Right ventricle myocardium superior (tissue), 1 donor: ENCODE measurements at regions of chr5 and their contacts with region 1.

Region 1: GRCh38 chr5:37005946-37006540 is 129.5 kb downstream of the NIPBL start:
- DNase-seq: no peak
- ATAC-seq: peak; percentile 51

Region 2: DNA sequence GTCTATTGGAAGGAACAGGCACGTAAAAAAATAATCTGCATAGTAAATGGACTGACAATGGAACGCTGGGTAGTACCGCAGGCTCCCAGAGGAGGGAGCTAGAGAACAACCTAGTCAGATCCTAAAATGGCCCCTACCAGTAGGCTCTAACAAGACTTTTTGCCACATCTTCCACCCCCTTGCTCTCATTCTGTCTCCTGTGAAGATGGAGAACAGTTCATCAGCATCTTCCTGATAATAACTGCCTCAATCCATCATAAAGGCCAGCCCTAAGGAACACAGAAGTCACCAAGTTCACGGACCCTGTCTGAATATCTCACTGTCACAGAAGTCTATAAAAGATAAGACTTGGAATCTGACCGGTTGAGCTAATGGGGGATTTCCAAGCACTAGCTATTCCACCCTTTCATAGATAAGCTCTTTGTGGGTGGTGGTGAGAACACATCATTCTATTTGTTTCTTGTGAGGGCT is 266.3 kb before region 1 on chr5:
- intact Hi-C with region 1: loop called (anchors 10 kb)
- DNase-seq: peak; percentile 74
- ATAC-seq: peak; percentile 61

Region 3: GRCh38 chr5:36854402-36855140 is 151.5 kb before region 1 on chr5:
- intact Hi-C with region 1: no loop called
- DNase-seq: peak; percentile 24
- ATAC-seq: no peak

Region 4: GRCh38 chr5:37251669-37252068 is 245.6 kb after region 1 on chr5:
- intact Hi-C with region 1: no loop called
- DNase-seq: no peak
- ATAC-seq: no peak